ENCODE measurements at regions of chr1 and their contacts with region 1.

Region 1: GRCh38 chr1:15314328-15315281 is 67.6 kb downstream of the FHAD1 start:
- DNase-seq: no peak
- H3K4me3 ChIP-seq: no peak overlapping the region
- H3K27ac ChIP-seq: no peak overlapping the region
- H3K4me1 ChIP-seq: no peaks in the 10 kb centered on the region
- H3K27me3 ChIP-seq: no peaks in the 10 kb centered on the region
- CTCF ChIP-seq: no peak

Region 2: DNA sequence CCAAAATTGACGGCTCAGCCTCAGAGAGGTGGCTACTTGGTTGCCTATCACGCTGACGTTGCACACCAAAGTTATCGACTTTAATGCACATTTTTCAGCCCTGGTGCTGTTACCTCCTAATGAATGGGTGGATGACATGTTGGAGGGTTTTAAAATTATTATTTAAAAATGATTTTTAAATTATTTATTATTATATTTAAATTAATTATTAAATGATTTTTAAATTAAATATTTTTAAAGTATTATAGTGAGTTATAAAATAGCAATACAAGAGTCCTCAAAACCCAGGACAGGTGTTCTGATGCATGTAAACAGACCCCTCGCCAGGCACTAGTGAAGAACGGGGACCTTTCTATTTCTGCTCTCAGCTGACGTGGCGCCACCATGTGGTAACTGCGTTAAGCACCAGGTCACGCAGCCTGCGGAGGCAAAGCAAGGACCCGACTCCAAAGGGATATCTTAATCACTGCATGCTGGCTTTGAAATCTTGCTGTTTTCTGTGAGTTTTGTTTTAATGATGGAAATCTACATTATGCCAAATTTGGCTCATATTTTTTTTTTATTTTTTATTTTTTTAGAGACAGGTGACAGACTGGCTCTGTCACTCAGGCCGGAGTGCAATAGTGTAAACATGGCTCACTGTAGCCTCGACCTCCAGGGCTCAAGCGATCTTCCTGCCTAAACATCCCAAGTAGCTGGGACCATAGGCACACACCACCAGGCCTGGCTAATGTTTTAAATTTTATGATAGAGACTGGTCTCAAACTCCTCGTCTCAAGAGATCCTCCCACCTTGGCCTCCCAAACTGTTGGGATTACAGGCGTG is 186.8 kb after region 1 on chr1:
- intact Hi-C with region 1: loop called (anchors 5 kb)
- DNase-seq: peak; percentile 66
- H3K4me3 ChIP-seq: no peak overlapping the region
- H3K27ac ChIP-seq: no peak overlapping the region
- H3K4me1 ChIP-seq: no peaks in the 10 kb centered on the region
- H3K27me3 ChIP-seq: no peaks in the 10 kb centered on the region
- CTCF ChIP-seq: peak; percentile 79